ENCODE measurements at regions of chr19 and their contacts with region 1.

Region 1: GRCh38 chr19:13588957-13589833 is 82.9 kb upstream of the CACNA1A start:
- DNase-seq: no peak
- H3K4me3 ChIP-seq: no peak overlapping the region
- H3K27me3 ChIP-seq: no peaks in the 10 kb centered on the region; the same call in 1 of the 2 replicates
- CTCF ChIP-seq: peak; percentile 98

Region 2: GRCh38 chr19:12983542-12984142 is 605.6 kb before region 1 on chr19:
- CTCF ChIA-PET with region 1: interaction called, 20 read pairs
- POLR2A ChIA-PET with region 1: no interaction called
- DNase-seq: no peak
- H3K4me3 ChIP-seq: peak overlapping the region; percentile 39
- H3K27me3 ChIP-seq: no peaks in the 10 kb centered on the region
- CTCF ChIP-seq: peak; percentile 71

Region 3: DNA sequence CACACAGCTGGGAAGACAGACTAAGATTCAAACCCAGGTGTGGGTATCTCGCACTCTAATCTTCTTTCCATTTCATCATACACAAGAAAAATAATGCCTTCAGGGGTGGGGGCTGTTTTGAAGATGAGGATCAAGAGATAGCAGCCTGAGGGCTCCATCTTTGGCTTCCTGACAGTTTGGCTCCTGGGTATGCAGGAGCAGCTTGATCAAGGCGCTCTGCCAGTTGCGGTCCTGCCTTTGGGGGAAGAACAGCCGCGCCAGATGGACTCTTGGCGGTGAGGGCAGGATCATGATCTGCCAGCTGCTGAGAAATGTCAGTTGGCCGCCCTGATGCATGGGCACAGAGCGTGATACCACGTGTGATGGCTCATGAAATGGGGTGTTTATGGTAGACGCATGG is 319.8 kb before region 1 on chr19:
- CTCF ChIA-PET with region 1: interaction called, 18 read pairs
- POLR2A ChIA-PET with region 1: no interaction called
- DNase-seq: no peak
- H3K4me3 ChIP-seq: no peak overlapping the region
- H3K27me3 ChIP-seq: no peaks in the 10 kb centered on the region
- CTCF ChIP-seq: no peak

Region 4: GRCh38 chr19:13277104-13277809 is 311.9 kb before region 1 on chr19:
- CTCF ChIA-PET with region 1: interaction called, 140 read pairs
- POLR2A ChIA-PET with region 1: no interaction called
- DNase-seq: peak; percentile 17
- H3K4me3 ChIP-seq: no peak overlapping the region
- H3K27me3 ChIP-seq: no peaks in the 10 kb centered on the region
- CTCF ChIP-seq: peak; percentile 51

Region 5: DNA sequence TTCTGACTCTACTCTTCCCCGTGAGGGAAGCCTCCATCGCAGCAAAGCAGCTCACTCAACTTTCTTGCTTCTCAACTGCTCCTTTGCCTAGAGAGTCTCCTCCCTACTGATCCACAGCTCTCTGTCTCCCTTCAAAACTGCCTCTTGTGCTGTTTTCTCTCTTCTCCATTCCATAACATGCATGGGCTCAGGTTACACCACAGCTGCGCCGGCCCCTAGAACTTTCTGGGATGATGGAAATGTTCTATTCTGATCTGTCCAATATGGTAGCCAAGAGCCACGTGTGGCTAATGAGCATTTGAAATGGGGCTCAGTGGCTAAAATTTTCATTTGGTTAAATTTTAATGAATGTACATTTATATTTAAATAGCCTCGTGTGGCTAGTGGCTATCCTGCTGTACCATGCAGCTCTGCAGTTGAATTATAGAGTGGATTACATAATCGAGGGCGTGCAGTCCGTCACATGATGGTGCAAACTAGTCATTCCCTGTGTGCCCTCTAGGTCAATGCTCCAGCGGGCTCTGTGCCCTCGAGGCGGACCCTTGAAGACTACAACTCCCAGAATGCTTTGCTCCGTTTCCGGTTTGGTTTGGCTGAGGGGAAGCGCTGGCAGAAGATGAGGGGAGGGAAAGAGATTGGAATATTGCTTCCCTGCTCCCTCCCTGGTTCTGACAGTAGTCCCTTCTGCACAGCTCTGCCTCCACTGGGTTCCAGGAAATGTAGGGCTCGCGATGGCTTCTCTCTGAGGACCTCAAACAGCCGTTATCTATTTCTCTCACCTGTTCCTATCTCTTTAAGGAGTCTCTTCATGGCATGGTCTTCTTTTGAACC is 192.7 kb before region 1 on chr19:
- CTCF ChIA-PET with region 1: no interaction called
- POLR2A ChIA-PET with region 1: no interaction called
- DNase-seq: peak; percentile 21
- H3K4me3 ChIP-seq: no peak overlapping the region
- H3K27me3 ChIP-seq: no peaks in the 10 kb centered on the region
- CTCF ChIP-seq: no peak

Region 6: DNA sequence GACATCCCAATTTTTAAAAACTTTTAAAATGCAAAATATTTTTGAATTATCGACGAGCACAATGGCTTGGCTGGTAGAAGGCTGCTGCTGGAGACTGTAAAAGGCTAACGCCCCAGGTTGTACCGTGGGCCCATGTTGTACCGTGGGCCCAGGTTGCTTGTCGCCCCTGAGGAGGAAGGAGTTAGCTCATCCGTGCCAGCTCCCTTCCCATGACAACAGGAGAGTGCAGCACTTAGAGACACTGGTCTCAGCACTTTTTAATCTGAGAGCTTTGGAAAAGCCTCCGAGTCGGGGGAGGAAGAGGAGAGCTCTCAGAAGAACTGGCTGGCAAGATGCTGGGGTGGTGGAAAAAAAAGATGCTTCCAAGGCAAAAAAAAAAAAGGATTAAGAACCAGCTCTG is 32.6 kb before region 1 on chr19:
- CTCF ChIA-PET with region 1: no interaction called
- POLR2A ChIA-PET with region 1: no interaction called
- DNase-seq: no peak
- H3K4me3 ChIP-seq: no peak overlapping the region
- H3K27me3 ChIP-seq: no peaks in the 10 kb centered on the region; the same call in 1 of the 2 replicates
- CTCF ChIP-seq: no peak

Region 7: DNA sequence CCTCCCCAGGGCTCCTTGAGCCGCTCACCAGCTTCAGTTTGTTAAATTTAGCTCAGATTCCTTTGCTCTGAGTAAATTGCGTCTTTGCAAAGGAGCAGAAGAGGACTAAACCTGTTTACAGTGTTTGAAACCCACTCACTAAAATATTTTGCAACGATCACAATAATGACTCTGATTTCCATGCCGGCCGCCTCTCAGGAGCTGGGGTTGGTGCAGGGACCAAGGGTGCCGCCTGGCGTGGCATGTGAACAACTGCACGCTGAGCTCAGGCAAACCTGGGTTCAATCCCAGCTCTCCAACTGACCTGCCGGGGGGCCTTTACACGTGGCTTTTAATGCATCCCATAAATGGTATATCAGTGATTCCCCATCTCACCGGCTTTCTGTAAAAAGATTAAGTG is 14.3 kb before region 1 on chr19:
- CTCF ChIA-PET with region 1: interaction called, 43 read pairs
- POLR2A ChIA-PET with region 1: no interaction called
- DNase-seq: no peak
- H3K4me3 ChIP-seq: no peak overlapping the region
- H3K27me3 ChIP-seq: no peaks in the 10 kb centered on the region
- CTCF ChIP-seq: peak; percentile 54

Region 8: GRCh38 chr19:13718733-13719132 is 129.5 kb after region 1 on chr19:
- CTCF ChIA-PET with region 1: interaction called, 105 read pairs
- POLR2A ChIA-PET with region 1: no interaction called
- DNase-seq: no peak
- H3K4me3 ChIP-seq: no peak overlapping the region
- H3K27me3 ChIP-seq: no peaks in the 10 kb centered on the region
- CTCF ChIP-seq: peak; percentile 51